ENCODE measurements at regions of chr12 and their contacts with region 1.

Region 1: DNA sequence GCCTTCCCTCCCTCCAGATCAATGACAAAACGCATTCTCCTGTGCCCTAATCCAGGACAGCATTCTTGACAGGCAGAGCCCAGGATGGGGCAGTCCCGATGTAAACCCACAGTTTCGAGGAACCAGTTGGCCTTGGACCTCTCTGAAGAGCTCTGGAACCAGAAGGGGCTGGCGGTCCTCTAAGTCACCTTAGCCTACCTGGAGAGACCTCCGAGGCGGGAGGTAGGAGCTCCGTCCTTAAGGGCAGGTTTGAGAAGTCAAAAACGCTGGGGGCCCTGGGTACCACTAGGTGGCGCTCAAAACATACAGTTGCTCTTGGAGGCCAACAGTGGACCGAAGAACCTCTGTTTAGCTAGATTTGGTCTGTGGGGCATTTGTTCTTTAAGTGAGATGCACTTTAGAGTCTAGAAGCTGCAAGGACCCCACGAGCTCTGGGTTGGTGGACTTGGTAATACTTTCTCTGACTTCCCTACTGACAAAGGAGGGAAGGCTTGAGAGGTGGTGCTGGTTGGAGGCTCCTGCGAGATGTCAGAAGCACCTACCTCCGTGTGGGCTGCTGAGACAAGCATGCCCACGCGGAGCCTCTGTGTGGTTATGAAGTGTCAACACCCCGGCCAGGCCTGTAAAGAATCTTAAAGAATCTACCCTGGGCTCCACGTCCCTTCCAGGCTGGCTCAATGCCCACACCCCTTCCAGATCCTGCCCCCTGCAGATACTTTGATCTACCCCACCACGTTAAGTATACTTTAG is 74.8 kb upstream of the CHST11 start:
- DNase-seq: peak; percentile 55
- ATAC-seq: peak; percentile 91
- H3K4me3 ChIP-seq: peak overlapping the region in 1 of 2 experiments; percentile 21; a peak in 1 of 4 replicates
- H3K27ac ChIP-seq: no peak overlapping the region
- H3K4me1 ChIP-seq: no peaks in the 10 kb centered on the region
- H3K27me3 ChIP-seq: no peaks in the 10 kb centered on the region; the same call in 1 of the 2 replicates
- CTCF ChIP-seq: peak; percentile 95

Region 2: DNA sequence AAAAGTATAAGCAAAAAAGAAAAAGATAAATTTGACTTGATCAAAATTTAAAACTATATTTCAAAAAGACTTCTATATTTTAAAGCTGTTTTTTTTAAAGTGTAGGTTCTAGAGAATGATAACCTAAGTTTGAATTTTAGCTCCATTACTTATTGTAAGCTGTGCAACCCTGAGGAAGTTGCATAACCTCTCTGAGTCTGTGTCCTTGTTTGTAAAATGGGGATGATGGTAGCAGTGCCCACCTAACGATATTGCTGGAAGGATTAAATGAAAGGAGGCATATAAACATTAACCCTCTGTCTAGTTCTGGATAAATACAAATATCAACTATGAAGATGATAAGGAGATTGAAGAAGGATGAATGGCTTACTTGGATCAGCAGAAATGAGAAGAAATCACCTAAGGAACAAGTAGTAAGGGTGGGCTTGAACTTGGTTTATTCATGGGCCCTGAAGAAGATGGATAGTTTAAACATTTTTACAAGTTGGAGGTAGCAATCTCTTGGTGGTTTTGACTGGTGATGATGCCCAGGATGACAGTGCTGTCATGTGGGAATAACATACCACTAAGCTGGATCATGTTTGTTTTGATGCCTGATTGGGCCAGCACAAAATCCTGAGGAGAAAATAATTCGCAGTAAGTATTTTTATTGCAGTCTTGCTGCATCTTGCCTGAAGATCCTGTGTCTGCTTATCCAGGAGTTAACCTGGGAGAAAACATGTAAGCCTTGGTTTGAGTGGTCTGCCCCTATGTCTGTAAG is 131.4 kb before region 1 on chr12:
- CTCF ChIA-PET with region 1: no interaction called
- POLR2A ChIA-PET with region 1: no interaction called
- in situ Hi-C with region 1: no loop called
- intact Hi-C with region 1: no loop called
- DNase-seq: no peak
- ATAC-seq: no peak
- H3K4me3 ChIP-seq: no peak overlapping the region
- H3K27ac ChIP-seq: peak overlapping the region; percentile 81
- H3K4me1 ChIP-seq: peaks cover 57% of the 10 kb centered on the region
- H3K27me3 ChIP-seq: no peaks in the 10 kb centered on the region
- CTCF ChIP-seq: no peak

Region 3: DNA sequence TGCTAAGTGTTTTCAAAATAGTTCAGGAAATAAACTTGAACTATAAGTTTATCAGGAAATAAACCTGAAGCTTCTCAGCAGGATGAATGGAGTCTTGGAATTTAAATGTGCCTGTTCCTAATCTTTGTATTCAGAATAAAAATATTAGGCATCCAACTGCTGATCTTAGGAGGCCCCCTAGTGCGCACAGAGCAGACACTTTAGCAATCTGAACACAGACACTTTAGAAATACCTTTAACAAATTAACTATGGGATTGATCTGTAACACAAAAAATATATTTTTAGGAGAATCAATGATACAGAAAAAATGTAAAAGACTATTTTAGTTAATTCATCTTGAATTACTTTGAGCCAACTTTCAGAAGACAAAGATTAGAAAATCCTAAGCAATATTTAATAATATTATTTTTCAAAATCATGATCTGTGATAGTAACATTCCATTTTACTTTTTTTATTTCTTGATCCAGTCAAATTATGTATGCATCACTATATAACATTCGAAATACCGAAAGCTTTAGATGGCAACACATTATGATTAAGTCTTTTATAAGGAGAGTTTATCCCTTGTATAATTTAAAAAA is 495.3 kb after region 1 on chr12:
- CTCF ChIA-PET with region 1: no interaction called
- POLR2A ChIA-PET with region 1: no interaction called
- in situ Hi-C with region 1: no loop called
- intact Hi-C with region 1: loop called (anchors 10 kb)
- DNase-seq: no peak
- ATAC-seq: no peak
- H3K4me3 ChIP-seq: no peak overlapping the region
- H3K27ac ChIP-seq: no peak overlapping the region
- H3K4me1 ChIP-seq: no peaks in the 10 kb centered on the region
- H3K27me3 ChIP-seq: no peaks in the 10 kb centered on the region
- CTCF ChIP-seq: peak; percentile 59; the same call in 1 of the 2 replicates

Region 4: DNA sequence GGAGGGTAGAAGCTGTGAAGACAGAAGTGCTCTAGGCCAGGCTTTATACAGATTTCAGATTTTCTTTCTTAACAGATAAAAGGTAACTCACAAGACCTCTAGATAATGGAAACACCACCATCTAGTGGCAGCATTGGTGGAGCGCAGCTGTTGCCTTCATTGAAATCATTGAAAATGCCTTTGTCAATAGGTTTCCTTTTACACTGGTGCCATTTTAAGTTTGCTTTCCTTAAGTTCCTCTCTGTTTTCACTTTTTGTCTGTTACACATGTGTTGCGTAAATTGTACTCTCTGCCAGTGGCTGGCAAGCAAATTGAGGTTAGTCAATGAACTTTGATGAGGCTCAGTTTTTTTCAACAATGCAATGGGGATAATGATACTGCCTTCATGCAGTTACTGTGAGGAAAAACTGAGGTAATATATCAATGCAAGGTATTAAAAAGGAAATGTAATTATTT is 671.2 kb after region 1 on chr12:
- CTCF ChIA-PET with region 1: no interaction called
- POLR2A ChIA-PET with region 1: no interaction called
- in situ Hi-C with region 1: no loop called
- intact Hi-C with region 1: loop called (anchors 2 kb)
- DNase-seq: peak; percentile 71
- ATAC-seq: peak; percentile 85
- H3K4me3 ChIP-seq: no peak overlapping the region
- H3K27ac ChIP-seq: no peak overlapping the region
- H3K4me1 ChIP-seq: no peaks in the 10 kb centered on the region
- H3K27me3 ChIP-seq: no peaks in the 10 kb centered on the region
- CTCF ChIP-seq: peak; percentile 88

Measured in Panc1 (cell line).